Activated naive CD4-positive, alpha-beta T cell treated with anti-CD3 and anti-CD28 coated beads for 36 hours (primary cell): ENCODE measurements at regions of chr1 and their contacts with region 1.

Region 1: DNA sequence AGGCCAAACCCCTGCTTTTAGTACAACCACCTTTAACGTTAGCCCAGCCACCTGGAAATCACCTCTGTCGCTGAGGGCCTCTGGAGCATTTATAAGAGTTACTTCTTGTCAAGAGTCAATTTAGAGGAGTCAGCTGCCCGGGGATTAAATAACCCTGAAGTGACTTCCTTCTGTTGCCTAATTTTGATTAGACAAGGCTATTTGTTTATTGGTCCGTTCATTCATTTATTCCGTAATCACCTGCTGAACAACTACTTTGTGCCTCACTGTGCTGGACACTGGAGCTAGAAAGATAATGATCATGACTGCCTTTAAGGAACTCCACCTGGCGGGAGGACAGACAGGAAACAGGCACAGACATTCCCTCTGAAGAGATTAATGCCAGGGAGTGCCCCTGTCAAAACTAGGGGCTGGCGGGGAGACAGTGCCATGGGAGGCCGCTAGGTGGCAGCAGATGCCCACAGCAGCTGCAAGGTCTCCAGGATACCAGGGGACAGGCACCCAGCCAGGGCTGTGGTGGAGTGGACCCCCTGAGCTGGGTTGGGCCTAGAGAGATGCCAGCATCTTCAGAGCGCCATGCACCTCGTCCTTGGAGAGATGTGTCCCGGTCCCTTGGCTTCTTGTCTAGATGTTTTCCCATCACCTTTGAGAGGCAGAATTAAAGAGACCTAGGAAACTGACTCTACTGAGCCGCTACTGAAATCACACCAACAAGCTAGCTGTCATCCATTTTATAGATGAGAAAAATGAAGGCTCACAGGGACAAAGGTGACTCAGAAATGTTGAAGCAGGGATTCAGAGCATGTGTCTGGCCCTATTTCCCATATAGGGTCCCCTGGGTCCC is 3.7 kb downstream of the REN start:
- DNase-seq: peak; percentile 87
- H3K4me3 Mint-ChIP-seq: no peak overlapping the region
- H3K27ac Mint-ChIP-seq: no peak overlapping the region
- H3K4me1 Mint-ChIP-seq: no peaks in the 10 kb centered on the region
- H3K27me3 Mint-ChIP-seq: peaks cover 1% of the 10 kb centered on the region

Region 2: GRCh38 chr1:203880606-203881005 is 281.8 kb before region 1 on chr1:
- CTCF ChIA-PET with region 1: no interaction called
- intact Hi-C with region 1: no loop called
- DNase-seq: no peak
- H3K4me3 Mint-ChIP-seq: no peak overlapping the region
- H3K27ac Mint-ChIP-seq: no peak overlapping the region
- H3K4me1 Mint-ChIP-seq: no peaks in the 10 kb centered on the region
- H3K27me3 Mint-ChIP-seq: no peaks in the 10 kb centered on the region

Region 3: DNA sequence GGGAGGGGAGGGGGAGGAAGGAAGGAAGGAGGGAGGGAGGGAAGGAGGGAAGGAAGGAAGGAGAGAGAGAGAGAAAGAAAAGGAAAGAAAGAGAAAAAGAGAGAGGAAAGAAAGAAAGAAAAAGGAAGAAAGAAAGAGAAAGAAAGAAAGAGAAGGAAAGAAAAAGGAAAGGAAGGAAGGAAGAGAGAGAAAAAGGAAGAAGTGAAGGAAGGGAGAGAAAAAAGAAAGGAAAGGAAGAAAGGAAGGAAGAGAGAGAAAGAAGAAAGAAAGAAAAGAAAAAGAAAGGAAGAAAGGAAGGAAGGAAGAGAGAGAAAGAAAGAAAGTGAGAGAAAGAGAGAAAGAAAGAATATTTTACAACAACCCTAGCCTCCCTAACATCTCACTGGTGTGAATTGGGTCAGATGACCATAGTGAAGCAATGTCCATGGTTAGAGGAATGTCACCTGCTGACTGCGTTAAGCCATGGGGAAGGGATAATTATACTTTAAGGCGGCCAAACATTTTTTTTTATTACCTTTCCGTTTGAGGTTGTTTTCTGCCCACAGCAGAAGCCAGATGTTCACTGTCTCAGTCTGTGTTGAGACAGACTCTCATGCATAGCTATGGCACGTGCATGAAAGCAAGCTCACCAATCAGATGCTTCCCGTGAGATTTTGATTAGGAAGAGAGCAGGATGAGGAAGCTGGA is 224.7 kb before region 1 on chr1:
- CTCF ChIA-PET with region 1: no interaction called
- intact Hi-C with region 1: no loop called
- DNase-seq: no peak
- H3K4me3 Mint-ChIP-seq: no peak overlapping the region
- H3K27ac Mint-ChIP-seq: no peak overlapping the region
- H3K4me1 Mint-ChIP-seq: no peaks in the 10 kb centered on the region
- H3K27me3 Mint-ChIP-seq: peaks cover 8% of the 10 kb centered on the region

Region 4: DNA sequence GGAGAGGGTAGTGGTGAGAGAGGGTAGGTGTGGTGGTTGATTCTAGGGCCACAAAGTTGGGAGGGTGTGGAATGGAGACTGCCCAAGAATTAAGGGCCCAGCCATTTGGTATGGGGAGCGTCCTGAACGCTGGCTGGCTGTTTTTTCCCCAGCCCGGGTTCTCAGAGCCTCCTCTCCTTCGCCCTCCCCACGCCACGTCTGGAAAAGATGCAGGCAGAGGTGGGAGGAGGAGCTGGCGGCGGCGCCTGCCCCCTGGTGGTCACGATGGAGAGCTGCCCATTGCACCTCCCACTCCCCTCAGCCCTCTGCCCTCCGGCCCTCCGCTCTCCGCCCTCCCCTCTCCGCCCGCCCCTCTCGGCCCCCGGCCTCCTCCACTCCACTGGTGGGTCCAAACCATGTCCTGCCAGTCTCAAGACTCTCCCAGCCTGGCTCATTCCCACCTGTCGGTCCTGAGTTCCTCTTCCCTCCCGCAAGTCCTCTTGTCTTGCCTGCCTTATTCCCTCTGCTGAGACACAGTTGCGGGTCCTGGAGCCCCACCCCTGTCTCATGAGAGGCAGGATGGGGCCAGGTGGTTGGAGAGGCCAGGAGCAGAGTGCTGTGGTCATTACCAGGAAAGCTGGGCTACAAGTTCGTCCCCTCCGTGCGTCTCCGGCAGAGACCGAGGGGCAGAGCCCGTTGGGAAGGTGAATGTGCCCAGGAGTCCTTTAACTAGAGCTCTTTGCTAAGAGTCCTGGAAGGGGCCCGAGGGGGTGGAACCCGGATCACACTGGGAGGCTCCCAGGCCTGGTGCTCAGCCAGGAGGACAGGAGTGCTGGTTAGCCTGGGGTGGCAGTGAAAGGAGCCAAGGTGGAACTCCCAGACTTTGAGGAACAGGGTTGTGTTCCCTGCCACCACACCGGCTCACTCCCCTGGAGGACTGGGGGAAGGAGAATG is 33.2 kb before region 1 on chr1:
- CTCF ChIA-PET with region 1: interaction called, 21 read pairs
- intact Hi-C with region 1: no loop called
- DNase-seq: peak; percentile 64
- H3K4me3 Mint-ChIP-seq: no peak overlapping the region
- H3K27ac Mint-ChIP-seq: no peak overlapping the region
- H3K4me1 Mint-ChIP-seq: peaks cover 7% of the 10 kb centered on the region
- H3K27me3 Mint-ChIP-seq: no peaks in the 10 kb centered on the region

Region 5: DNA sequence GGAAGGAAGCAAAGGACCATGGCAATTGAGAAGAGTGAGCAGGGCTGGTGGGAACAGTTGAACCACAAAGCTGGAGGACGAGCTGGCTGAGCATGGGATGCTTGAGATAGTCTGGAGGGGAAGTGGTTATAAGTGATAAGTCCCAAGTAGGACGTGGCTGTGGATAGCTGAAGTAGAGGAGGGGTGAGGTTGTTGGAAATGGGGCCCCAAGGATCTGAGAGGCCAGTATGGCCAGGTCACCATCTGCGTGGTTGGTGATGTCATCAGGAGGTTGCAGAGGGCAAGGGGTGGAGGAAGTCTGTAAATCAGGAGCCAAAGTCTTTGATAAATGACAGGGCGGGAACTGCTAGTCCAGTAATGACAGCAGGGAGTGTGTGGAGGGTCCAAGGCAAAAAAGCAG is 14.7 kb after region 1 on chr1:
- CTCF ChIA-PET with region 1: interaction called, 14 read pairs
- intact Hi-C with region 1: no loop called
- DNase-seq: no peak
- H3K4me3 Mint-ChIP-seq: no peak overlapping the region
- H3K27ac Mint-ChIP-seq: no peak overlapping the region
- H3K4me1 Mint-ChIP-seq: no peaks in the 10 kb centered on the region
- H3K27me3 Mint-ChIP-seq: peaks cover 9% of the 10 kb centered on the region

Region 6: GRCh38 chr1:204190212-204191211 is 28.1 kb after region 1 on chr1:
- CTCF ChIA-PET with region 1: interaction called, 10 read pairs
- intact Hi-C with region 1: no loop called
- DNase-seq: peak; percentile 52
- H3K4me3 Mint-ChIP-seq: peak overlapping the region; percentile 0
- H3K27ac Mint-ChIP-seq: no peak overlapping the region
- H3K4me1 Mint-ChIP-seq: peaks cover 22% of the 10 kb centered on the region
- H3K27me3 Mint-ChIP-seq: peaks cover 38% of the 10 kb centered on the region

Region 7: GRCh38 chr1:204207136-204207616 is 44.7 kb after region 1 on chr1:
- CTCF ChIA-PET with region 1: interaction called, 89 read pairs
- intact Hi-C with region 1: loop called (anchors 1 kb)
- DNase-seq: peak; percentile 83
- H3K4me3 Mint-ChIP-seq: no peak overlapping the region
- H3K27ac Mint-ChIP-seq: no peak overlapping the region
- H3K4me1 Mint-ChIP-seq: peaks cover 11% of the 10 kb centered on the region
- H3K27me3 Mint-ChIP-seq: peaks cover 15% of the 10 kb centered on the region

Region 8: GRCh38 chr1:204257954-204258752 is 95.7 kb after region 1 on chr1:
- CTCF ChIA-PET with region 1: interaction called, 13 read pairs
- intact Hi-C with region 1: no loop called
- DNase-seq: peak; percentile 62
- H3K4me3 Mint-ChIP-seq: no peak overlapping the region
- H3K27ac Mint-ChIP-seq: no peak overlapping the region
- H3K4me1 Mint-ChIP-seq: no peaks in the 10 kb centered on the region
- H3K27me3 Mint-ChIP-seq: no peaks in the 10 kb centered on the region

Region 9: DNA sequence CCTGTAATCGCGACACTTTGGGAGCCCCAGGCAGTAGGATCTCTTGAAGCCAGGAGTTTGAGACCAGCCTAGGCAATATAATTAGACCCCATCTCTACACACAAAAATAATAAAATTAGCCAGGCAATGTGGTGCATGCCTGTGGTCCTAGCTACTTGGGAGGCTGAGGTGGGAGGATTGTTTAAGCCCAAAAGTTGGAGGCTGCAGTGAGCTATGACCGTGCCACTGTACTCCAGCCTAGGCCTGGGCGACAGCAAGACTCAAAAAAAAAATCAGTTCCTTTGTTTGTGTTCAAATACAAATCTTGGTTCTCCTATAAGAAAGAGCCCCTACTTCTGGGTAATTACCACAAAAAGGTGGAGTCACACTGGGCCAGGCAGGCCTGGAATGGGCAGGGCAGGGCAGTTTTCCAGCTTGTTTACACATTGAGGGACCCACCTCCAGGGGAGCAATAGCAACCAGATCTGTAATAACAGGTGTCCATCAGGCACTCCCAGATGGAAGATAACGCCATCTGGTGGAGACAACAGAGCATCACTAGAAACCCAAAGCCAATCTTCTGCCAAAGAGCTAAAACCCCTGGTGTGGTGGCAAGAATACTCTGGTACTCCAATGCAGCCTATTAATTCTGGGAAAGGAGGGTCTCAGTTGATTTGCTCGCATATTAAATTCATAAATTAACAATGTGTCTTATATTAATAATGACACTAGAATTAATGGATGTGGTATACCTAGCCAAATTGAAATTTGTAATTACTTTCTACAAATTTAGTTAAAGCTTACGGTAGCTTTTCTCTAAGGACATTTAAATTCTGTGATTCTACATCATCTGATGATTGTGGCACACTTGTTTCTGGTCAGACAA is 236.0 kb after region 1 on chr1:
- CTCF ChIA-PET with region 1: interaction called, 38 read pairs
- intact Hi-C with region 1: loop called (anchors 1 kb)
- DNase-seq: peak; percentile 73
- H3K4me3 Mint-ChIP-seq: no peak overlapping the region
- H3K27ac Mint-ChIP-seq: peak overlapping the region; percentile 87
- H3K4me1 Mint-ChIP-seq: peaks cover 10% of the 10 kb centered on the region
- H3K27me3 Mint-ChIP-seq: no peaks in the 10 kb centered on the region